Activated CD4-positive, alpha-beta memory T cell treated with anti-CD3 and anti-CD28 coated beads for 36 hours (primary cell): ENCODE measurements at regions of chr5 and their contacts with region 1.

Region 1: DNA sequence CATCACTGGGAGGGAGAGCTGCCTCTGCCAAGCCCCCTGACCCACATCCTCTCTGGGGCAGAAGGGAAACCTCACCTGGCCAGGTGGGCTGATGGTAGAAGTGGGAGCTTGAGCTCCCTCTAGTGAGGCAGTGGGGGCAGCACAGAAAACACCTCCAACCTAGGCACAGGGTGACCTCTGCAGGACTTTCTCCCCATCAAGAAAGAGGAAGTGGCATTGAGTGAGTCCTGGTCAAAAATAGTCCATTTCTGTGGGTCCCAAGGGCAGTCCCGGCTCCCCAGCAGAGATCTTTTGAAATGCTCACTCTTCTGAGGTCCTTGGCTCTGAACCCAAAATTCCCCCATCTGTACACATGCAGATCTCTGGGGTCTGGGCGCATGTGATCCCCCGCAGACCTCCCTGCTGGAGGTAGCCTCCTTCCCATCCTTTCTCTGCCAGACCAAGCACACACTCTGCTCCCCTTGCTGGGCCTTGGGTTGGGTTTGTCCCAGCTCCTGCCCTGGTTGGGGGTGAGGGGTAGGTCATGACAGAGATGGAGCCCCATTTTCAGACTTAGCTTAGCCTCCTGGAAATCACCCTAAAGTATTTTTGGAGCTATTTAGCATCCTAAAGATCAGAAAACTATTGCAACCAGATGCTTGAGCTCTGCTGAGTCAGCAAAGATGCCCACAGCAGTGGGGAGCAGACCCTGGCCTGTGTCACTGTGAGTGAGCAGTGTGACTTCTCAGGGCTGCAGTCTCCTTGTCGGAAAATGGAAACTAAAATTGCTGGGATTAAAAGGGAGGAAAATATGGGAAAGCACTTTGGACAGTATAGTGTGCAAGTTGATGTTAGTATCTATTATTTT is 41.6 kb upstream of the LCP2 start:
- DNase-seq: peak; percentile 80
- H3K4me3 Mint-ChIP-seq: no peak overlapping the region
- H3K27ac Mint-ChIP-seq: peak overlapping the region; percentile 42
- H3K4me1 Mint-ChIP-seq: peaks cover 42% of the 10 kb centered on the region
- H3K27me3 Mint-ChIP-seq: no peaks in the 10 kb centered on the region

Region 2: DNA sequence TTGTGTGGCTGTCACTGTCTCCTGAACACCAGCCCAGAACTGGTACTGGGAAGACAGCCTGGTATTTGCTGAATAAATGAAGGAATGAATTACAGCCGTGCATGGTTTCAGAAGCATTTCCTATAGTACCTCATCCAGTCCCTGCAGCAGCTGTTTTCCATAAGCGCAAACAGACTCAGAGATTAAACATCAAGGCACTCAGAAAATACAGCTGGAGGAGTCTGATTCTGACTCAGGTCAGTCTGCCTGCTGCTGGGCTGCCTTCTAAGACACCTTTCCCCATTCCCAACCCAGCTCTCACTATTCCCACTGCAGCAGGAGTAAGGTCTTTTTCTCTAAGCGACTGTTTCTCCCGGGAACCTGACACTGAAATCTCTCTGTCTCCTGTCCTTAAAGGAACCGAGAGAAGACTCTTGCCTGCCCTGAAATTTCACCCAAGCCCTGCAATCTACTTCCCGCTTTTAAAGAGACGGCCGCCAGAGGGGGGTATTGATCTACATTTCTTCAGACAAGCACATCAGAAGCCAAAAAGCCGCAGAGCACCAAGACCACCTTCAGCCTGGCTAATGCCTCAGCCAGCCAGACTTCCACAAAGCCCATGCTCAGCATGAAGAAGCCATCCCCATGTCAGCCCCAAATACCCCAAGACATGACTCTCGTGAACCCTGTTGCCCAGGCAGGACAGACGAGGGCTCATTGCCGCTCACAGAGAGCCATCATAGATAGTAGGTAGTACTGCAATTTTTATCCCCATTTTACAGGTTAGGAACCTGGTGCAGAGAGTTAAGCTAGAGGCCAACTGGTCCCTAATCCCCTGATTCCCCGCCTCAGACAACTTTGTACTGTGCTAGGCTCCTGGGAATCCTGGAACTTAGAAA is 238.9 kb before region 1 on chr5:
- CTCF ChIA-PET with region 1: interaction called, 3 read pairs
- POLR2A ChIA-PET with region 1: no interaction called
- intact Hi-C with region 1: loop called (anchors 1 kb)
- DNase-seq: peak; percentile 78
- H3K4me3 Mint-ChIP-seq: no peak overlapping the region
- H3K27ac Mint-ChIP-seq: no peak overlapping the region
- H3K4me1 Mint-ChIP-seq: no peaks in the 10 kb centered on the region
- H3K27me3 Mint-ChIP-seq: peaks cover 3% of the 10 kb centered on the region

Region 3: GRCh38 chr5:170169996-170170395 is 169.2 kb before region 1 on chr5:
- CTCF ChIA-PET with region 1: no interaction called
- POLR2A ChIA-PET with region 1: no interaction called
- intact Hi-C with region 1: no loop called
- DNase-seq: no peak
- H3K4me3 Mint-ChIP-seq: no peak overlapping the region
- H3K27ac Mint-ChIP-seq: no peak overlapping the region
- H3K4me1 Mint-ChIP-seq: no peaks in the 10 kb centered on the region
- H3K27me3 Mint-ChIP-seq: no peaks in the 10 kb centered on the region

Region 4: GRCh38 chr5:170247363-170247762 is 91.8 kb before region 1 on chr5:
- CTCF ChIA-PET with region 1: interaction called, 17 read pairs
- POLR2A ChIA-PET with region 1: no interaction called
- intact Hi-C with region 1: no loop called
- DNase-seq: no peak
- H3K4me3 Mint-ChIP-seq: no peak overlapping the region
- H3K27ac Mint-ChIP-seq: peak overlapping the region; percentile 18
- H3K4me1 Mint-ChIP-seq: peaks cover 27% of the 10 kb centered on the region
- H3K27me3 Mint-ChIP-seq: no peaks in the 10 kb centered on the region

Region 5: DNA sequence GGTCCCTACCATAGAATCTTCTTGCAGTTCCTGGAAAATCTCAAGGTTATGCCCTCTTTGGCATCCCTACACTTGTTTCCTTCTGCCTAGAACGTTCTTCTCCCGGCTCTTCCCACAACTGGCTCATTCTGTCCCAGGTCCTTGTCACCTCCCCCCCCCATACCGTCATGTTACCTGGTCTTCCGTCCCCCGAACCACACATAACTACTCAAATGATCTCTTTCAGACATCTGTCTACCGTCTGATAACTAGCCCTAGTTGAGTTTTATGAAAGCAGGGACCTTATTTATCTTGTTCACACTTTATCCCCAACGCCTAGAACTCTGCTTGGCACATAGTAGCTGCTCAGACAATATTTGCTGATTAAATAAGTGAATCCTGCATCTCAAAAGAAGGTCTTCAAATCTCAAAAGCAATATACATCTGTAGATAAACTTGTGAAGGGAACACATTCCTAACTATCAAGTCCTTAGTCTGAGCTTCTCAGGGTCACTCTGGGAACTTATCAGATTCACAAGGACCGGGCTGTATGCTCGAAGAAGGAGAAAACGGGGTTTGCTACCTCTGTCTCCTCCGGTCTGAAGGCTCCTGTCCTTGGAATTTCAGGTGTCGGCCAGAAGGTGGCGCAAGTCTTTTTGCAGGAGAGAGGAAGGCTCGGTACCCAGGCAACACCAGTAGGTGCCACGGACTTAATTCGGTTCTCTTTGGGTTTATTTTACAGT is 71.6 kb before region 1 on chr5:
- CTCF ChIA-PET with region 1: interaction called, 290 read pairs
- POLR2A ChIA-PET with region 1: interaction called, 36 read pairs
- intact Hi-C with region 1: loop called (anchors 1 kb)
- DNase-seq: peak; percentile 87
- H3K4me3 Mint-ChIP-seq: peak overlapping the region; percentile 60
- H3K27ac Mint-ChIP-seq: peak overlapping the region; percentile 85
- H3K4me1 Mint-ChIP-seq: peaks cover 87% of the 10 kb centered on the region
- H3K27me3 Mint-ChIP-seq: no peaks in the 10 kb centered on the region

Region 6: GRCh38 chr5:170293273-170293672 is 45.9 kb before region 1 on chr5:
- CTCF ChIA-PET with region 1: interaction called, 111 read pairs
- POLR2A ChIA-PET with region 1: interaction called, 144 read pairs
- intact Hi-C with region 1: no loop called
- DNase-seq: peak; percentile 78
- H3K4me3 Mint-ChIP-seq: peak overlapping the region; percentile 99
- H3K27ac Mint-ChIP-seq: peak overlapping the region; percentile 99
- H3K4me1 Mint-ChIP-seq: peaks cover 70% of the 10 kb centered on the region
- H3K27me3 Mint-ChIP-seq: no peaks in the 10 kb centered on the region